Left ventricle myocardium inferior (tissue), 1 donor: ENCODE measurements at regions of chr2 and their contacts with region 1.

Region 1: GRCh38 chr2:149561309-149561926 is 26.2 kb downstream of the MMADHC start:
- DNase-seq: no peak
- H3K4me3 ChIP-seq: no peak overlapping the region
- H3K27ac ChIP-seq: no peak overlapping the region
- H3K4me1 ChIP-seq: peaks cover 8% of the 10 kb centered on the region
- H3K27me3 ChIP-seq: no peaks in the 10 kb centered on the region
- CTCF ChIP-seq: peak; percentile 90

Region 2: DNA sequence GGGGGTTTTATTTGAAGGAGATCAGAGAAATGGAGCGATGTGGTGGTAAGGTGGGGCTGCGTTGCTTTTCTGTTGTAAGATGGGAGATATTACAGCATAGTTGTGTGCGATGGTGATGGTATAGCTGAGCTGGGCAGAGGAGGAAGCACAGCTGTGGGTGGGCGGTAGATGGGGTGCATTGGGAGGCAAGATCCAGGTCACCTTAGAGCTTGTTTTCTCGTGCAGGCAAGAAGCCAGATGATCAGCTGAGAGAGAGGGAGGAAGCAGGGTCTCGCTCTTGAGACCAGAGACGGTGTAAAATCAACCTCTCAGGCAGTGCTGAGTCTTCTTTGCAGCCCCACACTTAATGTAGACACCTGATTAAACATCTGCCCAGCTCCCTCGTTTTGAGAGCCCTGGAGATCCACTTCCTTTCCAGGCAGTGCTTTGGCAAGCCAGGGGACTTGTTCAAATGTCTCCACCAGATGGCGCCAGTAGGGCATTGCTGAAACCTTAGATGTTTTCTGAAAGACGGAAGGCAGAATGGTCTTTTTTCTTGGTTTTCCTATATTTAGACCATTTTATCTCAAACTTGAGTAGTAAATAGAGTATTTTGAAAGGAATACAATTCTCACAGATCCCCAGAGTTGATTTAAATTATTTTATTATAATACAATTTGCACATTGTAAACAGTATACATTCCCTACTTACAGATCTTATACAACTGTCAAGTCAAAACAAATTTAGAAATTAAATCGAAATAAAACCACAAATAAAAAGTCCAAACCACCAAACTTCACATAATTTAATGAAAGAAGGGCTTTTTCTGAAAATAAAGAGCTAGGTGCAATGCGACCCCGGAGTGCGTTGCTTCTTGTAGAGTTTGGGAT is 544.1 kb before region 1 on chr2:
- intact Hi-C with region 1: loop called (anchors 5 kb)
- DNase-seq: peak; percentile 56
- H3K4me3 ChIP-seq: no peak overlapping the region
- H3K27ac ChIP-seq: no peak overlapping the region
- H3K4me1 ChIP-seq: no peaks in the 10 kb centered on the region
- H3K27me3 ChIP-seq: peaks cover 14% of the 10 kb centered on the region
- CTCF ChIP-seq: peak; percentile 87

Region 3: DNA sequence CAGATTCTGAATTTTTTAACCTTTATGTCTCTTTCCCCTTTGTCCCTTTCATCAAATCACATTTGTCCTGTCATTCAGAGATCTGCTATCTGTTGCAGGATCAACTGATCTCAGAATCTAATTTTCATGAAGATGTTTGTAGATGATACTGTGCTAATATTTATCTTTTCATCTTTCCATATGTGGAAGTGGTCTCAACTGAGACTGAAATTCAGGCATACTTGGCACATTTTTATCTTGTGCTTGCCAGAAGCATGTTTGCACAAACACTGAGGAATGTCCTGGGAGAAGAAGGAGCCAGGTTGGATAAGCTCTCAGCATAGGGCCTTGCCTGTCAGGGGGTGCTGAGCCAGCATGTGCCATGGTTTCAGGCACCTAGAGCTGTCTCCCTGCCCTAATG is 50.7 kb after region 1 on chr2:
- intact Hi-C with region 1: no loop called
- DNase-seq: no peak
- H3K4me3 ChIP-seq: no peak overlapping the region
- H3K27ac ChIP-seq: no peak overlapping the region
- H3K4me1 ChIP-seq: no peaks in the 10 kb centered on the region
- H3K27me3 ChIP-seq: no peaks in the 10 kb centered on the region
- CTCF ChIP-seq: no peak